ENCODE measurements at regions of chr1 and their contacts with region 1.

Region 1: GRCh38 chr1:93629099-93630059 is 52.3 kb downstream of the BCAR3 start:
- DNase-seq: peak; percentile 80
- ATAC-seq: peak; percentile 89
- H3K4me3 ChIP-seq: no peak overlapping the region
- H3K4me3 Mint-ChIP-seq: no peak overlapping the region
- H3K27ac ChIP-seq: no peak overlapping the region
- H3K27ac Mint-ChIP-seq: no peak overlapping the region
- H3K4me1 ChIP-seq: no peaks in the 10 kb centered on the region
- H3K4me1 Mint-ChIP-seq: peaks cover 4% of the 10 kb centered on the region
- H3K27me3 ChIP-seq: no peaks in the 10 kb centered on the region
- H3K27me3 Mint-ChIP-seq: no peaks in the 10 kb centered on the region
- CTCF ChIP-seq: peak; percentile 94

Region 2: GRCh38 chr1:93437976-93438605 is 191.3 kb before region 1 on chr1:
- CTCF ChIA-PET with region 1: interaction called, 18 read pairs
- POLR2A ChIA-PET with region 1: no interaction called
- intact Hi-C with region 1: loop called (anchors 5 kb)
- DNase-seq: peak; percentile 67
- ATAC-seq: peak; percentile 64
- H3K4me3 ChIP-seq: no peak overlapping the region
- H3K4me3 Mint-ChIP-seq: no peak overlapping the region
- H3K27ac ChIP-seq: no peak overlapping the region
- H3K27ac Mint-ChIP-seq: no peak overlapping the region
- H3K4me1 ChIP-seq: no peaks in the 10 kb centered on the region
- H3K4me1 Mint-ChIP-seq: no peaks in the 10 kb centered on the region
- H3K27me3 ChIP-seq: peaks cover 0 to 10% (median 0%) of the 10 kb centered on the region in 4 experiments
- H3K27me3 Mint-ChIP-seq: peaks cover 15% of the 10 kb centered on the region
- CTCF ChIP-seq: peak; percentile 77

Region 3: DNA sequence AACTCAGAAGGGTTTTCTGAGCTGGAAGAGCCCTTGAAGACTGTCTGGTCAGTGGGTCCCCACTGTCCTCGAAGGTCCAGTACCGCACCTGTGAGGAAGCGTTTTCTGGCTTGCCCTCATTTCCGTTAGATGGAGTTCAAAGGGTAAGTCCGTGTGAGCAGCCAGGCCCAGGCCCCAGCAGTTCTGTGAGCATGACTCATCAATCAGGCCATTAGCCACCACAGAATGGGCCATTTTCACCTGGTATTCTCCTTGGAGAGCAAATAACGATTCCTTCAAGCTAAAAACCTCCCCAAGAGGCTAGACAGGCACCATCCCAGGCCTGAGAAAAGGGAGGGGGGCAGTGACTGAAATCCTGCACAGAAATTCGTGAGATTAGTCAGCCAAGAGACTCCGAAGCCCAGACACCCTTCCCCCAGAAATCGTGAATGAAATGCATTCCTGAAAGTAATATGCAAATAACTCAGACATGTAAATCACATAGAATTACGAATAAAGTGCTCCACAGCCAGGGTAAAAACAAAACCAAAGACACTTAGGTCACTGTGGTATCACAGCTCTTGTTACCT is 13.7 kb before region 1 on chr1:
- CTCF ChIA-PET with region 1: interaction called, 59 read pairs
- POLR2A ChIA-PET with region 1: no interaction called
- intact Hi-C with region 1: no loop called
- DNase-seq: no peak
- ATAC-seq: peak; percentile 52
- H3K4me3 ChIP-seq: no peak overlapping the region
- H3K4me3 Mint-ChIP-seq: peak overlapping the region; percentile 56
- H3K27ac ChIP-seq: peak overlapping the region in 1 of 2 donors; percentile 9
- H3K27ac Mint-ChIP-seq: peak overlapping the region; percentile 34
- H3K4me1 ChIP-seq: peaks cover 9 to 32% of the 10 kb centered on the region in 2 donors
- H3K4me1 Mint-ChIP-seq: peaks cover 71% of the 10 kb centered on the region
- H3K27me3 ChIP-seq: no peaks in the 10 kb centered on the region
- H3K27me3 Mint-ChIP-seq: no peaks in the 10 kb centered on the region
- CTCF ChIP-seq: no peak

Region 4: GRCh38 chr1:93680757-93681550 is 51.6 kb after region 1 on chr1:
- CTCF ChIA-PET with region 1: interaction called, 18 read pairs
- POLR2A ChIA-PET with region 1: no interaction called
- intact Hi-C with region 1: loop called (anchors 1 kb)
- DNase-seq: peak; percentile 86
- ATAC-seq: peak; percentile 78
- H3K4me3 ChIP-seq: peak overlapping the region; percentile 65 to 86 (median 76)
- H3K4me3 Mint-ChIP-seq: peak overlapping the region; percentile 100
- H3K27ac ChIP-seq: peak overlapping the region; percentile 12 to 25
- H3K27ac Mint-ChIP-seq: peak overlapping the region; percentile 98
- H3K4me1 ChIP-seq: peaks cover 23 to 34% of the 10 kb centered on the region in 2 donors
- H3K4me1 Mint-ChIP-seq: peaks cover 69% of the 10 kb centered on the region
- H3K27me3 ChIP-seq: no peaks in the 10 kb centered on the region
- H3K27me3 Mint-ChIP-seq: no peaks in the 10 kb centered on the region
- CTCF ChIP-seq: peak; percentile 46

Region 5: GRCh38 chr1:93734999-93735398 is 105.6 kb after region 1 on chr1:
- CTCF ChIA-PET with region 1: interaction called, 51 read pairs
- POLR2A ChIA-PET with region 1: no interaction called
- intact Hi-C with region 1: loop called (anchors 2 kb)
- DNase-seq: peak; percentile 24
- ATAC-seq: no peak
- H3K4me3 ChIP-seq: no peak overlapping the region
- H3K4me3 Mint-ChIP-seq: no peak overlapping the region
- H3K27ac ChIP-seq: no peak overlapping the region
- H3K27ac Mint-ChIP-seq: no peak overlapping the region
- H3K4me1 ChIP-seq: peaks cover 0 to 8% of the 10 kb centered on the region in 2 donors
- H3K4me1 Mint-ChIP-seq: peaks cover 18% of the 10 kb centered on the region
- H3K27me3 ChIP-seq: no peaks in the 10 kb centered on the region
- H3K27me3 Mint-ChIP-seq: no peaks in the 10 kb centered on the region
- CTCF ChIP-seq: peak; percentile 33

Region 6: DNA sequence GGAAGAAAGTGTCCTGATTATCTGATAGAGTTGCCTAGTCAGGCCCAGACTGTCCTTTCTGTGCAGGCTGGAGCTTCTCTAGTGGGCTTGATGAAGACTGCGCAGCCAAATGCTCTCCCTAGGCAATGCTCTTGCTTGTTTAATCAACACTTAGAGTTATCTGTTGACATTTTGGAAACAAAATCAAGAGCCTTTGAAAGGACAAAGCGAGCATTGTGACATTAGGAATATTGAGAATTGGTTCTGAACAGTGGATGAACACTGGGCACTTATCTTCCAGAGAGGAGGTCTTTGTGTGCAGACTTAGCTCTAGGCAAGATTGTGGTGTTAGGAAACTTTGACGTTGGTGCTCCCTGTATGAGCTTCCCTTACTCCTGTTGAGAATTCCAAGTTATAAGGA is 155.2 kb after region 1 on chr1:
- CTCF ChIA-PET with region 1: interaction called, 19 read pairs
- POLR2A ChIA-PET with region 1: no interaction called
- intact Hi-C with region 1: no loop called
- DNase-seq: no peak
- ATAC-seq: no peak
- H3K4me3 ChIP-seq: no peak overlapping the region
- H3K4me3 Mint-ChIP-seq: no peak overlapping the region
- H3K27ac ChIP-seq: no peak overlapping the region
- H3K27ac Mint-ChIP-seq: no peak overlapping the region
- H3K4me1 ChIP-seq: no peaks in the 10 kb centered on the region
- H3K4me1 Mint-ChIP-seq: no peaks in the 10 kb centered on the region
- H3K27me3 ChIP-seq: no peaks in the 10 kb centered on the region
- H3K27me3 Mint-ChIP-seq: no peaks in the 10 kb centered on the region
- CTCF ChIP-seq: no peak

Region 7: DNA sequence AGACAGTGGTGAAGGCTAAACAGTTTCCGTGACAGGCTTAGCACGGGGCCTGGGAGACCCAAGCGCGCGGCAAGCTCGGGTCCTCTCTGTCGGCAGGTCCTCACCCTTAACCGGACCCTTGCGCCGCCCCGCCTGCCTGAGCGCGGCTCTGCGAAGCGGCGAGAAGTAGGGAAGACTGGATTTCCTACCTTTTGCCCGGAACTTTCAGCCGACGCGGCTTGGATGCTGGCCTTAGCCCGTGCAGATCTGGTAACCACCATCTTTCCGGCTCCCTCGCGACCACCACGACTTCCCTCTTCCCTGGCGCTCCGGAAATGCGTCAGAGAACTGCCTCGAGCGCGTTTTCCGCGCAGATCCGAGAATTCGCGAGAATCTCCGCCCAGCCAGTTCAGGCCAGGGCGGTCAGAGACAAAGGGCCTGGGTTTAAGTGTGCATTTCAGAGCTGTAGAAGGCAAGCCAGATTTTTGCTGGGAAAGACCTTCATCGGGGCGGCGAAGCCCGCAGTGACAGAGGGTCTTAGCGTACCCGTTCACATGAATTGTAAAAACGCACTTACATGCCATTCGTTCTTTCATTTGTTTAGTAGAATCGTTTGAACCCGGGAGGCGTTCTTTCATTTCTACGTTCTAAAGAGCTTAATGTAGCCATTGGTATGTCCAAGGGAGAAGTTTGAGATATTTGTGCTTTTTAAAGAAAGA is 249.7 kb after region 1 on chr1 and contains the start of gene DNTTIP2:
- CTCF ChIA-PET with region 1: interaction called, 15 read pairs
- POLR2A ChIA-PET with region 1: no interaction called
- intact Hi-C with region 1: loop called (anchors 1 kb)
- DNase-seq: peak; percentile 91
- ATAC-seq: peak; percentile 89
- H3K4me3 ChIP-seq: peak within 1 kb of the TSS; percentile 82 to 99 (median 96)
- H3K4me3 Mint-ChIP-seq: peak within 1 kb of the TSS; percentile 98
- H3K27ac ChIP-seq: peak within 1 kb of the TSS; percentile 89 to 94
- H3K27ac Mint-ChIP-seq: peak within 1 kb of the TSS; percentile 100
- H3K4me1 ChIP-seq: peaks cover 26 to 30% of the 10 kb centered on the region in 2 donors
- H3K4me1 Mint-ChIP-seq: peaks cover 42% of the 10 kb centered on the region
- H3K27me3 ChIP-seq: no peaks in the 10 kb centered on the region
- H3K27me3 Mint-ChIP-seq: no peaks in the 10 kb centered on the region
- CTCF ChIP-seq: no peak
- total RNA-seq, gene DNTTIP2: 58.3 and 62.1 TPM in 2 replicates

Measured in B cell (primary cell).